ENCODE measurements at regions of chr11 and their contacts with region 1.

Region 1: DNA sequence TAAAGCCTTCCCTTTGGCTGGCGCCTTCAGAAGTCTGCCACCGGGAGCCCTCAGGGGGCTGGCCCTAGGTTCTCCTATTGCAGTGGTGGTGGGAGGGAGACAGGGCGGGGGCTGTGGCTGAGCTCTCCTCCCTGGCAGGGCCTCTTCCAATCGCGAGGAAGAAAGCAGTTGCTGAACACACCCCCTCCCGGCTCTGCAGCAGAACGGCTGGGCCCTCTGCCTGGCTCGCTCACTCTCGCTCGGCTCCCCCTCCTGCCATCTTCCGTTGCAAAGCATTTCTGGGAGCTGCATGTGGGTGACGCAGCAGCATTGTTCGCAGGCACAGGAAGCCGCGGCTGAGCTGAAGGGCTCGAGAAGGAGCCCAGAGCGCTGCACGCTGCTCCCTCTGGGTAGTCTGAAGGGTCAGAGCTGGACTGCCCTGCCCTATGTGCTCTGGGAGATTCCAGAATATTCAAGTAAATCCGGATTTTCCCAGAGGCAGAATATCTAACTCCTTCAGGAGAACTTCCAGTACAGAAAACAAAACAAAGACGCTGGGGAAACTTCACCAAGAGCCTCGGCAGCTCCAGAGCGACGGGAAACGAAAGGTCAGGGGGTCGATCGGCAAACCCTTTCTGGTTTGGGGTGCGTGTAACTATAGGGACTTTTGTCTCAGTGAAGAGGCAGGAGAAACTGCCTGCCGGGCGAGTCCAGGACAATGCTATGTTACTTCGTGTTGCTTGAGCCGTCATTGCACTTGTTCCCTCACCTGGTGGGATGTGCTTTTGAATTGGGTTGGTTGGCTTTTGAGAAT is 26.3 kb upstream of the GRK2 start:
- DNase-seq: peak; percentile 89 to 99 (median 95)
- ATAC-seq: peak; percentile 89
- H3K4me3 ChIP-seq: peak overlapping the region; percentile 87 to 98
- H3K4me3 Mint-ChIP-seq: peak overlapping the region; percentile 96
- H3K27ac ChIP-seq: peak overlapping the region; percentile 95 to 96
- H3K27ac Mint-ChIP-seq: peak overlapping the region; percentile 100
- H3K4me1 ChIP-seq: peaks cover 40% of the 10 kb centered on the region
- H3K4me1 Mint-ChIP-seq: peaks cover 56% of the 10 kb centered on the region
- H3K27me3 ChIP-seq: no peaks in the 10 kb centered on the region
- H3K27me3 Mint-ChIP-seq: no peaks in the 10 kb centered on the region
- CTCF ChIP-seq: no peak

Region 2: DNA sequence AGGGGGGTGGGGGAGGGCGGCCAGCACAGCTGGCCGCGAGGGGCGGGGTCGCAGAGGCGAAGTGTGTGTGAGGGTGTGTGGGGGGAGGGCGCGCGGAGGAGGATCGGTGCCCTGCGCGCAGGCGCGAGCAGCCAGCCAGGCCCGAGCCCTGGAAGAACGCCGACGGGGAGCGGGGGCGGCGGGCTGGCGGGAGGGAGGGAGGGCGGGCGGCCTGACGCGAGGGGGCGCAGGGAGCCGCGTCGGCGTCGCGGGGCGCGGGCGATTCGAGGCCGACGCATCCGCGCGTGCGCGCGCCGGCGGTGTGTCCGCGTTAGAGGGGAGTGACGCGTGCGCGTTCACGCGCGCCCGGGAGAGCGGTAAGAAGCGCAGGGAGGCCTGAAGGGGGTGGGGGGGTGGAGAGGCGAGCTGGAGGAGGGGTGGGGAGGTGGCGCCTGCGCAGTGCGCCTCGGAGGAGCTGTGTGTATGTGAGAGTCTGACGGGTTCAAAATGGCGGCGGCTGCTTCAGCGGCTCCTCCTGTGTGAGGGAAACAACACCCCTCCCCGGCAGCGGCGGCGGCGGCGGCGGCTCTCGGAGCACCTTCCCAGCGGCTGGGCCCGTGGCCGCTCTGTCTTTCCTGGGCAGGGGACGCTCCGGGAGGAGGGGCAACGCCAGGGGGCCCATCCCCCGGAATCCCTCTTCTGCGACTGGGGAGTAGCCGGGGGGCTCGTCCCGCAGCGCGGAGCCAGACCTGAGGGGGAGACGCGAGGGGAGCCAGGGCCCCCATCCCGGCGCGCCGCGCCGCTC is 121.0 kb before region 1 on chr11 and contains the start of gene KDM2A:
- CTCF ChIA-PET with region 1: no interaction called
- POLR2A ChIA-PET with region 1: interaction called, 8 read pairs
- intact Hi-C with region 1: loop called (anchors 1 to 2 kb)
- DNase-seq: peak; percentile 98 to 100 (median 99)
- ATAC-seq: peak; percentile 81
- H3K4me3 ChIP-seq: peak within 1 kb of the TSS; percentile 62 to 80
- H3K4me3 Mint-ChIP-seq: peak within 1 kb of the TSS; percentile 97
- H3K27ac ChIP-seq: peak within 1 kb of the TSS; percentile 78 to 92
- H3K27ac Mint-ChIP-seq: peak within 1 kb of the TSS; percentile 96
- H3K4me1 ChIP-seq: peaks cover 34% of the 10 kb centered on the region
- H3K4me1 Mint-ChIP-seq: peaks cover 40% of the 10 kb centered on the region
- H3K27me3 ChIP-seq: no peaks in the 10 kb centered on the region
- H3K27me3 Mint-ChIP-seq: no peaks in the 10 kb centered on the region
- CTCF ChIP-seq: no peak
- total RNA-seq, gene KDM2A: 412 to 431 TPM

Region 3: GRCh38 chr11:67178878-67179277 is 61.1 kb before region 1 on chr11:
- CTCF ChIA-PET with region 1: no interaction called
- POLR2A ChIA-PET with region 1: no interaction called
- intact Hi-C with region 1: no loop called
- DNase-seq: no peak
- ATAC-seq: no peak
- H3K4me3 ChIP-seq: no peak overlapping the region
- H3K4me3 Mint-ChIP-seq: no peak overlapping the region
- H3K27ac ChIP-seq: no peak overlapping the region
- H3K27ac Mint-ChIP-seq: no peak overlapping the region
- H3K4me1 ChIP-seq: no peaks in the 10 kb centered on the region
- H3K4me1 Mint-ChIP-seq: peaks cover 33% of the 10 kb centered on the region
- H3K27me3 ChIP-seq: no peaks in the 10 kb centered on the region
- H3K27me3 Mint-ChIP-seq: no peaks in the 10 kb centered on the region
- CTCF ChIP-seq: no peak

Region 4: DNA sequence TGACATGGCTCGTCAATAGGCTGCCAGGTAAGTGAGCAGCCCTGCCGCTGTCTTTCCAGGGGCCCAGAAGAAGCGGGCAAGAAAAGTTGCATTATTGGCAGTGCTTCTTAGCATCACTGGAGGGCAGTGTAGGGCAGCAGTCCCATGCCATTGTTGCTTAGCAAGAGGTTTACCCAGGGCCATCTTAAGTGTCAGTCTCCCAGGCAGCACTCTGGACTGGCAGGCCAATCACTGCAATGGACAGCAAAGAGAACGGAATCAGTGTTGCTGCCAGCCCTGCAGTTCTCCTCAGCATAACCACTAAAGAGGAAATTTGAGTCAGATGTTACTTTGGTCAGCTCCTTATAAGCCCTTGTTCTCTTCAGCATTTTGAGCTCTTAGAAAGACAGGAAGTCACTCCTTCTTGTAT is 12.9 kb after region 1 on chr11:
- CTCF ChIA-PET with region 1: interaction called, 4 read pairs
- POLR2A ChIA-PET with region 1: interaction called, 17 read pairs
- intact Hi-C with region 1: loop called in 1 of 2 experiments (anchors 2 kb)
- DNase-seq: peak in 4 of 9 experiments; percentile 37 to 74 (median 60)
- ATAC-seq: peak; percentile 76
- H3K4me3 ChIP-seq: no peak overlapping the region
- H3K4me3 Mint-ChIP-seq: no peak overlapping the region
- H3K27ac ChIP-seq: peak overlapping the region in 1 of 2 experiments; percentile 10
- H3K27ac Mint-ChIP-seq: peak overlapping the region; percentile 53
- H3K4me1 ChIP-seq: peaks cover 21% of the 10 kb centered on the region
- H3K4me1 Mint-ChIP-seq: peaks cover 37% of the 10 kb centered on the region
- H3K27me3 ChIP-seq: no peaks in the 10 kb centered on the region
- H3K27me3 Mint-ChIP-seq: no peaks in the 10 kb centered on the region
- CTCF ChIP-seq: peak; percentile 23

Region 5: DNA sequence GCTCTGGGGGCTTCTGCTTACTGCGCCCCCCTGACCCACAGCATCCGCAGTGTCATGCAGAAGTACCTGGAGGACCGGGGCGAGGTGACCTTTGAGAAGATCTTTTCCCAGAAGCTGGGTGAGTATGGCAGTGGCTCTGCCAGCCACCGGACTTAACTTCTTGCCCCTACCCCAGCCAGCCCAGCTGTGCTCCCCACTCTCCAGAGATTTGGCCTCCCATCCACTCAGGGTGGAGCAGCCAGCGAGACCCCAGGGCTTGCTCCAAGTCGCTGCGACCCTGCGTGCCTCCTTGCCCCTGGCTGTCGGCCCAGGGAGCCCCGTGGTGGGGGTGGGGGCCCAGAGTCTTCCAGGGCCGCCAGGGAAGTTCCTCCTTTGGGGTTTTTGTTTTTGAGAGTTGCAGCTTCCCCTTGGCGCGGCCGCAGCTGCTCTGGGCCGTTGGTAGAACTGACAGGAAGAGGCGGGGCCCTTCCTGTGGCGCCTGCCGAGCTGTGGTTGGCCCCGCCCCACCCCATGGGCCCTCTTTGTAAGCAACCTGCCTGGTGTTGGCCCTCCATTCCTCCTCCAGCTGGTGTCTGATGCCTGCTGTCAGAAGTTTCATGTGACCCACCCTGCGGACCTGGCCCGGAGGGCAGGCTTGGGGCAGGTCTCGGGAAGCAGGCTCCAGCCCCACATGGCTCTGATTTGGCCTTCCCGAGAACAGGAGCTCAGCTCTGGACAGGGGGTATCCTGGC is 37.4 kb after region 1 on chr11:
- CTCF ChIA-PET with region 1: interaction called, 5 read pairs
- POLR2A ChIA-PET with region 1: interaction called, 20 read pairs
- intact Hi-C with region 1: no loop called
- DNase-seq: peak; percentile 82 to 98 (median 93)
- ATAC-seq: peak; percentile 92
- H3K4me3 ChIP-seq: peak overlapping the region; percentile 46 to 79
- H3K4me3 Mint-ChIP-seq: peak overlapping the region; percentile 79
- H3K27ac ChIP-seq: peak overlapping the region; percentile 74 to 76
- H3K27ac Mint-ChIP-seq: peak overlapping the region; percentile 95
- H3K4me1 ChIP-seq: peaks cover 100% of the 10 kb centered on the region
- H3K4me1 Mint-ChIP-seq: peaks cover 68% of the 10 kb centered on the region
- H3K27me3 ChIP-seq: no peaks in the 10 kb centered on the region
- H3K27me3 Mint-ChIP-seq: no peaks in the 10 kb centered on the region
- CTCF ChIP-seq: no peak

Region 6: GRCh38 chr11:67288452-67289225 is 48.7 kb after region 1 on chr11:
- CTCF ChIA-PET with region 1: interaction called, 5 read pairs
- POLR2A ChIA-PET with region 1: interaction called, 20 read pairs
- intact Hi-C with region 1: loop called (anchors 1 to 2 kb)
- DNase-seq: peak; percentile 78 to 97 (median 92)
- ATAC-seq: peak; percentile 67
- H3K4me3 ChIP-seq: peak overlapping the region; percentile 90 to 92
- H3K4me3 Mint-ChIP-seq: peak overlapping the region; percentile 80
- H3K27ac ChIP-seq: peak overlapping the region; percentile 79 to 98
- H3K27ac Mint-ChIP-seq: peak overlapping the region; percentile 98
- H3K4me1 ChIP-seq: peaks cover 64% of the 10 kb centered on the region
- H3K4me1 Mint-ChIP-seq: peaks cover 59% of the 10 kb centered on the region
- H3K27me3 ChIP-seq: no peaks in the 10 kb centered on the region
- H3K27me3 Mint-ChIP-seq: no peaks in the 10 kb centered on the region
- CTCF ChIP-seq: peak; percentile 58